ENCODE measurements at regions of chr2 and their contacts with region 1.

Region 1: DNA sequence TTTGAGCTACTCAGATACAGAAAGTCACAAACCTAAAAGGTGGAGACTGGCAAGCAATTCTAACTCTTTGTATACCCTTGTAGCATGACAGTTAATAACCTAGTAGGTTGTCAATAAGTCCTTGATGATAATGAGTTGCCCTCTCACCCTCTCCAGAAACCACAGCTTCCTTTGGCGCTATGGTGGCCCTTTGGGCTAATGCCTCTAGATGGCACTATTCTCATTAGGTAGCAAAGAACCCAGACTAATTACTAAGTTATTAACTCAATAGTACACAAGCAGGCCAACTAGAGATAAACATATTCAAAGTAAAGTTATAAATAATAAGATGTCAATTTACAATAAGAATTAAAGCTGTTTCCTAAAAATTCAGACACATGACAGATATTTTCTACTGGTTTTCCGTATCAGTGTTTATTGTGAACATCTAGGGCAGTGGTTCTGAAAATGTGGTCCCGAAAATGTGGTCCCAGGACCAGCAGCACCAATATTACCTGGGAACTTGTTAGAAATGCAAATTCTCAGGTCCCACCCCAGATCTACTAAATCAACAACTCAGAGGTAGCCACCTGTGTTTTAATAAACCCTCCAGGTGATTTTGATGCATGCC is 41.1 kb downstream of the LDAH start:
- DNase-seq: no peak
- ATAC-seq: peak; percentile 87
- H3K4me3 ChIP-seq: no peak overlapping the region
- H3K27ac ChIP-seq: no peak overlapping the region
- H3K4me1 ChIP-seq: no peaks in the 10 kb centered on the region
- H3K27me3 ChIP-seq: no peaks in the 10 kb centered on the region
- CTCF ChIP-seq: peak; percentile 67 to 69 (median 68)
- EP300 ChIP-seq: no peak
- POLR2A ChIP-seq: no peak
- RAD21 ChIP-seq: peak; percentile 75

Region 2: GRCh38 chr2:20707601-20708000 is 74.2 kb before region 1 on chr2:
- CTCF ChIA-PET with region 1: interaction called, 13 read pairs
- POLR2A ChIA-PET with region 1: no interaction called
- RAD21 ChIA-PET with region 1: no interaction called
- SMC1A ChIA-PET with region 1: no interaction called
- in situ Hi-C with region 1: no loop called
- intact Hi-C with region 1: no loop called
- DNase-seq: no peak
- ATAC-seq: no peak
- H3K4me3 ChIP-seq: no peak overlapping the region
- H3K27ac ChIP-seq: no peak overlapping the region
- H3K4me1 ChIP-seq: no peaks in the 10 kb centered on the region
- H3K27me3 ChIP-seq: no peaks in the 10 kb centered on the region
- CTCF ChIP-seq: no peak
- EP300 ChIP-seq: no peak
- POLR2A ChIP-seq: no peak
- RAD21 ChIP-seq: no peak

Region 3: GRCh38 chr2:20758997-20759396 is 22.8 kb before region 1 on chr2:
- CTCF ChIA-PET with region 1: interaction called, 14 read pairs
- POLR2A ChIA-PET with region 1: no interaction called
- RAD21 ChIA-PET with region 1: interaction called, 6 read pairs
- SMC1A ChIA-PET with region 1: interaction called, 10 read pairs
- in situ Hi-C with region 1: no loop called
- intact Hi-C with region 1: no loop called
- DNase-seq: no peak
- ATAC-seq: peak; percentile 67
- H3K4me3 ChIP-seq: no peak overlapping the region
- H3K27ac ChIP-seq: no peak overlapping the region
- H3K4me1 ChIP-seq: no peaks in the 10 kb centered on the region
- H3K27me3 ChIP-seq: no peaks in the 10 kb centered on the region
- CTCF ChIP-seq: no peak
- EP300 ChIP-seq: no peak
- POLR2A ChIP-seq: no peak
- RAD21 ChIP-seq: no peak

Region 4: GRCh38 chr2:20771299-20771698 is 10.5 kb before region 1 on chr2:
- CTCF ChIA-PET with region 1: interaction called, 22 read pairs
- POLR2A ChIA-PET with region 1: no interaction called
- RAD21 ChIA-PET with region 1: no interaction called
- SMC1A ChIA-PET with region 1: interaction called, 4 read pairs
- in situ Hi-C with region 1: no loop called
- intact Hi-C with region 1: no loop called
- DNase-seq: no peak
- ATAC-seq: no peak
- H3K4me3 ChIP-seq: no peak overlapping the region
- H3K27ac ChIP-seq: no peak overlapping the region
- H3K4me1 ChIP-seq: no peaks in the 10 kb centered on the region
- H3K27me3 ChIP-seq: no peaks in the 10 kb centered on the region
- CTCF ChIP-seq: no peak
- EP300 ChIP-seq: no peak
- POLR2A ChIP-seq: no peak
- RAD21 ChIP-seq: no peak

Region 5: DNA sequence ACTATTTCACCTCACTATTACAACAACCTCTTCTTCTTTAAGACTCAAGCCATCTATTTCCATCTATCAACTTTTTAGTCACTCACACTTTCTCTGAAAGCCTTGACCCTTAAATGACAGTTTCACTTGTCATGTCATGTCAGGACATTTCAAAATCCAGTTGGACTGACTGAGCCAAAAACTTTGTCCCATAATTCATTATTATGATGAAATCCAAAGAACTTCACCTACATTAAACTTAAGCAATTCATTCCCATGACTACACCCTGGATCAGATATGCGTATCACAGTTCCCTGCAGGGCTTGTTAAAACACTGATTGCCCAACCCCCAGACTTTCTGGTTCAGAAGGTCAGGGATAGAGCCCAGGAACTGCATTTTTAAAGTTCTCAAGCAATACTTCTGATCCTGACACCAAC is 14.6 kb after region 1 on chr2:
- CTCF ChIA-PET with region 1: interaction called, 30 read pairs
- POLR2A ChIA-PET with region 1: no interaction called
- RAD21 ChIA-PET with region 1: no interaction called
- SMC1A ChIA-PET with region 1: interaction called, 5 read pairs
- in situ Hi-C with region 1: no loop called
- intact Hi-C with region 1: no loop called
- DNase-seq: no peak
- ATAC-seq: peak; percentile 19; the same call in 1 of the 3 replicates
- H3K4me3 ChIP-seq: peak overlapping the region; percentile 1; the same call in 1 of the 2 replicates
- H3K27ac ChIP-seq: peak overlapping the region; percentile 39; the same call in 1 of the 2 replicates
- H3K4me1 ChIP-seq: peaks cover 12% of the 10 kb centered on the region; the same call in 1 of the 2 replicates
- H3K27me3 ChIP-seq: no peaks in the 10 kb centered on the region
- CTCF ChIP-seq: no peak
- EP300 ChIP-seq: no peak
- POLR2A ChIP-seq: no peak
- RAD21 ChIP-seq: no peak

Region 6: GRCh38 chr2:20897047-20897446 is 115.3 kb after region 1 on chr2:
- CTCF ChIA-PET with region 1: no interaction called
- POLR2A ChIA-PET with region 1: no interaction called
- RAD21 ChIA-PET with region 1: no interaction called
- SMC1A ChIA-PET with region 1: no interaction called
- in situ Hi-C with region 1: no loop called
- intact Hi-C with region 1: no loop called
- DNase-seq: no peak
- ATAC-seq: no peak
- H3K4me3 ChIP-seq: no peak overlapping the region
- H3K27ac ChIP-seq: no peak overlapping the region
- H3K4me1 ChIP-seq: no peaks in the 10 kb centered on the region
- H3K27me3 ChIP-seq: peaks cover 3 to 6% of the 10 kb centered on the region in 2 experiments
- CTCF ChIP-seq: no peak
- EP300 ChIP-seq: no peak
- POLR2A ChIP-seq: no peak
- RAD21 ChIP-seq: no peak

Region 7: GRCh38 chr2:20962939-20963557 is 181.3 kb after region 1 on chr2:
- CTCF ChIA-PET with region 1: interaction called, 123 read pairs
- POLR2A ChIA-PET with region 1: interaction called, 3 read pairs
- RAD21 ChIA-PET with region 1: interaction called, 23 read pairs
- SMC1A ChIA-PET with region 1: interaction called, 38 read pairs
- in situ Hi-C with region 1: no loop called
- intact Hi-C with region 1: loop called (anchors 1 kb)
- DNase-seq: no peak
- ATAC-seq: peak; percentile 91
- H3K4me3 ChIP-seq: no peak overlapping the region
- H3K27ac ChIP-seq: no peak overlapping the region
- H3K4me1 ChIP-seq: no peaks in the 10 kb centered on the region
- H3K27me3 ChIP-seq: no peaks in the 10 kb centered on the region; a peak in 1 of 4 replicates
- CTCF ChIP-seq: peak; percentile 81 to 84 (median 82)
- EP300 ChIP-seq: no peak
- POLR2A ChIP-seq: no peak
- RAD21 ChIP-seq: peak; percentile 86

Measured in GM12878 (cell line).